Left cardiac atrium (tissue), 4 donors: ENCODE measurements at regions of chr9 and their contacts with region 1.

Region 1: DNA sequence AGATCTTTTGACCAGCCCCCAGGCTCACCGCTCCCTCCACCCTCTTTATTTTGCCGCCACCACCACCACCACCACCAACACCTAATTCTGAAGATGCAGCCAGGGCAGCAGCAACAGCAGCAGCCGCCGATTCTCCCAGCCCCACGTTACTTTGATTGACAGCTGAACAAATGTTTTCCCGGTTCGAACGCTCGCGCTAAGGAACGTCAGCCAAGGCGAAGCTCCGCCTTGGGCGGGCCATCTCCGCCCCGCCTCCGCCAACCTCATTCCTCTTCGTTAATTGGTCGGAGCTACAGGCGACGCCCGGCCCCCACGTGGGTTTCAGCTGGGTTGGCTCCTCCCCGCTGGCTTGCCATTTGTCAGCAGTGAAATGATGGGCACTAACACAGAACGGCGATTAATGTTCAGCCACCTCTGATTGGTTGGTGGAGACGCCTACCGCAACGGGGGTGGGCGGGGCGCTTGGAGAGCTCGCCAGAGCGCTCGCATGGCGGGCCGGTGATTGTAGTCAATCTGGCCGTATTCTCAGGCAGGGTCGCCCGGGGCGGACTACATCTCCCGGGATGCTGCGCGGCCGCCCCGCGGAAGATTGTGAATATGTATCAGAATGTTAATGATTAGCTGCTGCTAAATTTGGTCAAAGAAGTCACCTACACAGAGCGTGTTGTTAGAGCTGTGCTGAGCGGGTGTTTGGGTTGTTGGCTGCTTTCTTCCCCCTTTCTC is at the start of gene TLE4:
- DNase-seq: peak; percentile 100
- ATAC-seq: peak; percentile 93 to 97
- total RNA-seq, gene TLE4: 16.2 to 16.3 TPM

Region 2: DNA sequence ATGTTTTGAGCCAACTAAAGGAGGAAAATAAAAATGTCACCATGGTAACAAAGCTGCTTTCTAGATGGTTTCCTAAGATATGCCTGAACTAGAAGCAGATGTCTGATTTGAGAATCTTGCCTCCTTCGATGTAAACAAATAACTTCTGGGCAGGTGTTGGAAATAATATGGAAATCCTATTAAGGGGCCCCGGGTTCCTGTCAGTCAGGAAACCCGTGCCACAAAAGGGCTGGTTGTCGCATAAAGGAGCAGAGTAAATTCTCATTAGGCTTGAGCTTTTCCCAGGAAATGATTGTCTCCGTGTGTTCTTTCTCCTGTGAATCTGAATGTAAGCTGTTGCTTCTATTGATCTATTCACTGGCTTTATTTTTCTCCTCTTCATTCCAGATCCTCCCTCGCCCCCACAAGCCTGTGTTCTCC is 91.1 kb after region 1 on chr9:
- intact Hi-C with region 1: loop called in 1 of 2 experiments (anchors 10 kb)
- DNase-seq: no peak
- ATAC-seq: no peak